ENCODE measurements at regions of chr2 and their contacts with region 1.

Region 1: GRCh38 chr2:36403675-36404230 is 48.2 kb downstream of the CRIM1 start:
- DNase-seq: no peak
- H3K4me3 ChIP-seq: peak overlapping the region in 1 of 2 donors; percentile 6
- H3K27ac ChIP-seq: peak overlapping the region; percentile 7 to 58
- H3K4me1 ChIP-seq: peaks cover 0 to 58% of the 10 kb centered on the region in 2 donors
- H3K27me3 ChIP-seq: no peaks in the 10 kb centered on the region
- CTCF ChIP-seq: no peak

Region 2: GRCh38 chr2:36367895-36368353 is 35.8 kb before region 1 on chr2:
- intact Hi-C with region 1: loop called (anchors 5 kb)
- DNase-seq: no peak
- H3K4me3 ChIP-seq: peak overlapping the region in 1 of 2 donors; percentile 41
- H3K27ac ChIP-seq: peak overlapping the region; percentile 13 to 50
- H3K4me1 ChIP-seq: peaks cover 20 to 84% of the 10 kb centered on the region in 2 donors
- H3K27me3 ChIP-seq: no peaks in the 10 kb centered on the region
- CTCF ChIP-seq: no peak

Region 3: DNA sequence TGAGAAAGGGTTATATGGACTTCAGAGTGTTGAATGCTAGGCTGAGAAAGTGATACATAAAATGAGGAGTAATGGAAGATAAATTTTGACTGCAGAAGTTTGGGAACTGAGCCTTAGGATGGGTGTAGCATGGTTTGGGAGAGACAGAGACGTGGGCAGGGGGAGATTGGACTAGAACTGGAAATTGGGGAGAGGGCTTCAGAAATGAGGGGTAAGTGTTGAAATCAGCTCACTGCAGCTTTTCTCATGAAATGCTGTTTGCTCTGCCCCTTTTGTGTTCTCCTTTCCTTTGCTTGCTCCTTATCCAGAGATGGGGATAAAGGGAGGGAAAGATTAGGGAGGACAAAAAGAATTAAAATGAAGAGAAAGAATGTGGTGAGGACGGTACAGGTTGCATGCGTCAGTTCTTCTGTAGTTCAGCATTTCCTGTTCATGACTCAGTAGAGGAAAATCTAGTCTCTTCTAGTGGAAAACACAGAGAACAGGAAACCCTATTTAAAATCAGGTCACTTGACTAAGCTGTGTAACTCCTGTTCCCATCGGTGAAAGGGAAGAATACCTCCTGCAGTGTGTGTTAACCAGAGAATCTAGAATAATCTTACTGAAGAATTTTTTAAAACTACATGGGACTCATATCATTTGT is 57.4 kb after region 1 on chr2:
- intact Hi-C with region 1: no loop called
- DNase-seq: no peak
- H3K4me3 ChIP-seq: no peak overlapping the region
- H3K27ac ChIP-seq: peak overlapping the region; percentile 77 to 78
- H3K4me1 ChIP-seq: peaks cover 6 to 55% of the 10 kb centered on the region in 2 donors
- H3K27me3 ChIP-seq: no peaks in the 10 kb centered on the region
- CTCF ChIP-seq: no peak

Region 4: DNA sequence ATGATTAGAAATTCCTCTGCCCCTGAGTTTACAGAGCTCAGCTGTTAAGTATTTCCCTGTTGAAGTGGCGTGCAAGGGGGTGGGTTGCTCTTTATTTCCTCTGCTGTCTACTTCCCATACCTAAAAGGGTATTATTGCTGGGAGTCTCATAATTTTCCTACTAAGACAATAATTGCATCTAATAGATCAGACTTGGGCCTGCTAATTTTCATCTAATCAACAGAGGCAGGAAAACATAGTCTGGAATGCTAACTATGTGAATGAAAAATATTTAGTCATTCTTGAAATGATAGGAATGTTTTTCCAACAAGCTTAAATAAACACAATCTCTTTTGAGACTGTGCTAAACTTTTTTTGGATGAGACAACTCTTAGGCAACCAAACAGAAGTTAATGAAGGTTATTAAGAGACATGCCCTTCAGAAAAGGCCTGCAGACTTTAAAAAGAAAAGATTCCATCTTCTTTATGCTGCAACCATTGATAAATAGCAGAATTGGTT is 82.8 kb after region 1 on chr2:
- intact Hi-C with region 1: no loop called
- DNase-seq: no peak
- H3K4me3 ChIP-seq: no peak overlapping the region
- H3K27ac ChIP-seq: peak overlapping the region; percentile 81 to 88
- H3K4me1 ChIP-seq: peaks cover 15 to 66% of the 10 kb centered on the region in 2 donors
- H3K27me3 ChIP-seq: no peaks in the 10 kb centered on the region
- CTCF ChIP-seq: no peak

Measured in ascending aorta (tissue), 2 donors.